OCI-LY7 (cell line): ENCODE measurements at regions of chr14 and their contacts with region 1.

Region 1: GRCh38 chr14:71320107-71320733 is 413.0 kb downstream of the PCNX1 start:
- DNase-seq: peak; percentile 99
- H3K4me3 ChIP-seq: peak within 1 kb of the TSS; percentile 92
- H3K27ac ChIP-seq: peak within 1 kb of the TSS; percentile 79
- H3K4me1 ChIP-seq: peaks cover 40% of the 10 kb centered on the region
- CTCF ChIP-seq: no peak

Region 2: GRCh38 chr14:70907176-70907995 is 412.8 kb before region 1 on chr14 and contains the start of gene PCNX1:
- CTCF ChIA-PET with region 1: no interaction called
- POLR2A ChIA-PET with region 1: no interaction called
- intact Hi-C with region 1: loop called (anchors 5 kb)
- DNase-seq: peak; percentile 94
- H3K4me3 ChIP-seq: peak within 1 kb of the TSS; percentile 81
- H3K27ac ChIP-seq: peak within 1 kb of the TSS; percentile 66
- H3K4me1 ChIP-seq: peaks cover 15% of the 10 kb centered on the region
- CTCF ChIP-seq: peak; percentile 81
- total RNA-seq, gene PCNX1: 27.7 and 33.8 TPM in 2 replicates

Region 3: DNA sequence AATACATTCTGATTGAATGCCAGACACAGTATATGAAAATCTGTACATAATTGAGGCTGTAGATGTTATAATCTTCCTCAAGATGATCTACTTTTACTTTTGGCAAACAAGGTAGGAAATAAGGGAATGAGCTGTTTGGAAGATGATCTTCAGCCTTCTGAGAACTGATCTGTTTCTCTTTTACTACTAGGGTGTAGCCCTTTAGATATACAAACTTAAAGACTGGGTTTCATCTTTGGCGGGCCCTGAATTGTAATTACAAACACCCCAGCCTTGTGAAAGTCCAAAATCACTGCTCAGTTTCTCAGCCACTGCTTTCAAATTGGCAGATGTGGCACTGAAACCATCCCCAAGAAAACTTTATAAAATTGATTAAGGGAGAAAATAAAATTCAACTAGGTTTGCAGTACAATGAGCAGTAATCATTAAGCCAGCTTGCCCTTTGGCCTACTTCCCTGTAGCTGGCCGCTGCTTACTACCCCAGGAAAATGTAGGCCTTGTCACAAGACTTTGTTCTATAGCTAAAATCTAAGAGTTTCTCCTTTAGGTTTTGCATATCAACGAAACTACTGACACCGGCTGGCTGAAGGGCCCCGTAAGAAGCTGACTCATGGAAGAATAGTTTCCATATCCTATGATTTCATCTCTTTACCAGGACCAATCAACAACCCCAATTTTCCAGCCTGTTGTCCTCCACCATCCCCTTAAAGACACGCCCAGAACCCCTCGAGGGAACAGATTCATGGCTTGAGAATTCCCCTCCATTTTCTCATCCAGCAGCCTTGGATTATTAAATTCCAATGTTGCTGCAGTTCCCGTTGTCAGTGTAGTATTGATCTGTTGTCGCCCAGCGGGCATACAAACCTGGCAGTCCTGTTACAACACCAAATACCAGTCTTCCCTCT is 202.1 kb before region 1 on chr14:
- CTCF ChIA-PET with region 1: no interaction called
- POLR2A ChIA-PET with region 1: interaction called, 5 read pairs
- intact Hi-C with region 1: loop called (anchors 5 kb)
- DNase-seq: peak; percentile 24
- H3K4me3 ChIP-seq: no peak overlapping the region
- H3K27ac ChIP-seq: peak overlapping the region; percentile 99
- H3K4me1 ChIP-seq: peaks cover 54% of the 10 kb centered on the region
- CTCF ChIP-seq: no peak

Region 4: GRCh38 chr14:71403656-71404055 is 83.4 kb after region 1 on chr14:
- CTCF ChIA-PET with region 1: no interaction called
- POLR2A ChIA-PET with region 1: interaction called, 3 read pairs
- intact Hi-C with region 1: loop called (anchors 2 kb)
- DNase-seq: peak; percentile 56
- H3K4me3 ChIP-seq: no peak overlapping the region
- H3K27ac ChIP-seq: no peak overlapping the region
- H3K4me1 ChIP-seq: peaks cover 11% of the 10 kb centered on the region
- CTCF ChIP-seq: no peak

Region 5: DNA sequence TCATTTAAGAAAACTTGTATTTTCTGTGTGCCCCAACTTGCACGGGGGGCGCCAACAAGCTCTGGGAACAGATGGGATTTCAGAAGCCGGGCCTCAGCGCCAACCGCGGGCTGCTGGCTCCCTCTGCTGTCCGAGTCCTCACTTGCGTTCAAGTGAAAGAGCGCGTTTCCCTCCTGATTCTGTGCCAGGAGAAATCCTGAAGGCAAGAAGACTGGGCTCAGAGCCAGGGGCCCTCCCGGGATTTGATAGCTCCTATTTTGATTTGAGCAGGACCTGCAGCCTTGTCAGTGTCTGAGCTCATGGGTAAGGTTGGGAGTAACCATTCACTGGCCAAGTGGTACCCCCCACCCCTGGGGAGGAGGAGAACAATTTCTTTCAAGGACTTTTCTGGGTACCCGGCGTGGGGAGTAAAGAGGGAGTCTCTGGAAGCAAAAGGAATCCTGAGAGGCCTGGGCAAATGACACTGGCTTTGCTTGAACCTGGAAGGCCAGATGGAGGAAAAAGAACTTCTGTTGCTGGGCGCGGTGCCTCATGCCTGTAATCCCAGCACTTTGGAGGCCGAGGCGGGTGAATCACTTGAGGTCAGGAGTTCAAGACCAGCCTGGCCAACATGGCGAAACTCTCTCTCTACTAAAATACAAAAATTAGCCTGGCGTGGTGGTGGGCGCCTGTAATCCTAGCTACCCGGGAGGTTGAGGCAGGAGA is 433.1 kb after region 1 on chr14:
- CTCF ChIA-PET with region 1: interaction called, 3 read pairs
- POLR2A ChIA-PET with region 1: no interaction called
- intact Hi-C with region 1: loop called (anchors 1 kb)
- DNase-seq: peak; percentile 81
- H3K4me3 ChIP-seq: no peak overlapping the region
- H3K27ac ChIP-seq: no peak overlapping the region
- H3K4me1 ChIP-seq: peaks cover 8% of the 10 kb centered on the region
- CTCF ChIP-seq: peak; percentile 98